ENCODE measurements at regions of chr1 and their contacts with region 1.

Region 1: GRCh38 chr1:186363891-186364290 is 11.2 kb downstream of the TPR start:
- DNase-seq: no peak
- H3K4me3 ChIP-seq: no peak overlapping the region
- H3K27ac ChIP-seq: no peak overlapping the region
- H3K4me1 ChIP-seq: peaks cover 0 to 5% (median 0%) of the 10 kb centered on the region in 6 donors
- H3K27me3 ChIP-seq: no peaks in the 10 kb centered on the region
- CTCF ChIP-seq: no peak
- POLR2A ChIP-seq: no peak

Region 2: DNA sequence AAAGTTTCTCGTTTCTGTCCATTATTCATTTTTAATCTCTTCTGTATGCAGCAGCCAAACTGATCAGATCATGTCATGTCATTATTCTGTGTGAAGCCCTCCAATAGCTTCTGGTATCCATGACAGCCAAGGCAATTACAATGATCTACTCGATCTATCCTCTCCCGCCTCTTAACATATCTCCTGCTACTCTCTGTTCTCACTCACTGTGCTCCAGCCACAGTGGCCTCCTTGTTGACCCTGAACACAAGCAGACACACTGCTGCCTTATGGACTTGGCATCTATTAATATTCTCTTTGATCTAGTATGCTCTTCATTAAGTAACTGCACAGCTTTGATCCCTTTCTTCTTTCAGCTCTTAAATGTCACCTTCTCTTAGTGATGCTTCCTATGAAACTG is 48.3 kb before region 1 on chr1:
- intact Hi-C with region 1: loop called (anchors 10 kb)
- DNase-seq: no peak
- H3K4me3 ChIP-seq: no peak overlapping the region
- H3K27ac ChIP-seq: no peak overlapping the region
- H3K4me1 ChIP-seq: no peaks in the 10 kb centered on the region
- H3K27me3 ChIP-seq: no peaks in the 10 kb centered on the region
- CTCF ChIP-seq: no peak
- POLR2A ChIP-seq: no peak

Measured in spleen (tissue), 13 donors.